Endothelial cell of umbilical vein (primary cell): ENCODE measurements at regions of chr7 and their contacts with region 1.

Region 1: GRCh38 chr7:157903710-157904109 is 566.9 kb downstream of the DNAJB6 start:
- DNase-seq: no peak
- H3K4me3 ChIP-seq: no peak overlapping the region
- H3K27ac ChIP-seq: no peak overlapping the region
- H3K4me1 ChIP-seq: no peaks in the 10 kb centered on the region
- H3K27me3 ChIP-seq: no peaks in the 10 kb centered on the region
- CTCF ChIP-seq: no peak
- POLR2A ChIP-seq: no peak

Region 2: GRCh38 chr7:156220078-156220605 is 1683.6 kb before region 1 on chr7:
- CTCF ChIA-PET with region 1: no interaction called
- POLR2A ChIA-PET with region 1: no interaction called
- dilution Hi-C with region 1: no loop called
- intact Hi-C with region 1: loop called (anchors 5 kb)
- DNase-seq: no peak
- H3K4me3 ChIP-seq: no peak overlapping the region
- H3K27ac ChIP-seq: no peak overlapping the region
- H3K4me1 ChIP-seq: no peaks in the 10 kb centered on the region
- H3K27me3 ChIP-seq: no peaks in the 10 kb centered on the region
- CTCF ChIP-seq: no peak
- POLR2A ChIP-seq: no peak

Region 3: DNA sequence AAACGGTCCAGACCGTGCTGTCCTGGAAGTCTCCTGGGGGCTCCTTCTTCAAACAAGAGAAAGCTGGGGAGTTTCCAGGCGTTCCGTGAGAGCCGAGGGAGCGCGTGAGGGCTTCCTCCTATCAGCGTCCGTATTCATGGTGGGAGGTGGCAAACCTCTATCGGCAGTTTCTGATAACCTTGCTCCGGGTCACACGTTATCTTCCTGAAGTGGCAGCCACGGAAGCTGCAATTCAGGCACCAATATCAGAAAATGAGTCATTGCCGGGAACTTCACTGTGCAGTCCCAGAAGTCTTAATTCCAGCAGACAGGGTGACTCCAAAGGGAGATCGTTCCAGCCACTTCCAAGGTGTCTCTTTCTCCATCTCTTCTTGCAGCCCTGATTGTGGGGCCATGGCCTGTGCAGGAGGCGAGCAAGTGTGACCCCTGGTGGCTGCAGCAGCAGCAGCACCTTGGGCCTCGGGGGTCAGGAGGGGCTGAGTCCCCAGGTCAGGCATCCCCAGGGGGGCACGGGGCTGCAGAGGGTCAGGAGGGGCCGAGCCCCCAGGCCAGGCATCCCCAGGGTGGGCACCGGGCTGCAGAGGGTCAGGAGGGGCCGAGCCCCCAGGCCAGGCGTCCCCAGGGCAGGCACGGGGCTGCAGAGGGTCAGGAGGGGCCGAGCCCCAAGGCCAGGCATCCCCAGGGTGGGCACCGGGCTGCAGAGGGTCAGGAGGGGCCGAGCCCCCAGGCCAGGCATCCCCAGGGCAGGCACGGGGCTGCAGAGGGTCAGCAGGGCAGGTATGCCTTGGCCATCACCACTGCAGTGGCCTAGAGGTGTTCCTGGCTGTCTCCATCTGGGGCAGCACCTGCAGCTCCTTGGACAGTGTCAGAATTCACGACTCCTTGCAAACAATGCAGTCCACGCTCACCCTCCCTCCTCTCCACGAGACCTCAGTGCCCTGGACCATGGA is 28.2 kb before region 1 on chr7:
- CTCF ChIA-PET with region 1: no interaction called
- POLR2A ChIA-PET with region 1: no interaction called
- dilution Hi-C with region 1: no loop called
- intact Hi-C with region 1: no loop called
- DNase-seq: no peak
- H3K4me3 ChIP-seq: no peak overlapping the region
- H3K27ac ChIP-seq: no peak overlapping the region
- H3K4me1 ChIP-seq: no peaks in the 10 kb centered on the region
- H3K27me3 ChIP-seq: no peaks in the 10 kb centered on the region
- CTCF ChIP-seq: no peak
- POLR2A ChIP-seq: no peak

Region 4: GRCh38 chr7:158077934-158078910 is 174.5 kb after region 1 on chr7:
- CTCF ChIA-PET with region 1: no interaction called
- POLR2A ChIA-PET with region 1: no interaction called
- dilution Hi-C with region 1: no loop called
- intact Hi-C with region 1: no loop called
- DNase-seq: no peak
- H3K4me3 ChIP-seq: no peak overlapping the region
- H3K27ac ChIP-seq: no peak overlapping the region
- H3K4me1 ChIP-seq: no peaks in the 10 kb centered on the region
- H3K27me3 ChIP-seq: no peaks in the 10 kb centered on the region
- CTCF ChIP-seq: no peak
- POLR2A ChIP-seq: no peak